ENCODE measurements at regions of chr13 and their contacts with region 1.

Region 1: DNA sequence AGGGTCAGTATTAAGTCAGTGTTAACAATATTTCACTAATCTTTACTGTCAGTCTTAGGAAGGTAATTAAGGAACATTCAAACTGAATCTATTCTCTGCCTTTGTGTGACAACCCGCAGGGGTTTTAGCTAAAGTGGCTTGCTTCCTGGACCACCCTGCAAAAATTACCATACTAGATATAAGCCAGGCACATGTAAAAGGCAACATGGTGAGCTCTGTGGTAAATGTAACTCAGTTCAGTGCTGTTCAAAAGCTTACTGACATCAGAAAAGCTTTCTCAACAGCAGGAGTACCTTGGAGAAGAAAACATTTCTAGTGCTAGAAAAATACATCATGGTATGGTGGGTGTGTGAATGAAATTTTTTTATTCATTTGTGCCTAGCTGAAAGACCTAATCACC is 116.7 kb downstream of the FREM2 start:
- DNase-seq: no peak
- ATAC-seq: no peak
- H3K4me3 ChIP-seq: no peak overlapping the region
- H3K4me3 Mint-ChIP-seq: no peak overlapping the region
- H3K27ac ChIP-seq: no peak overlapping the region
- H3K27ac Mint-ChIP-seq: no peak overlapping the region
- H3K4me1 ChIP-seq: no peaks in the 10 kb centered on the region
- H3K4me1 Mint-ChIP-seq: no peaks in the 10 kb centered on the region
- H3K27me3 ChIP-seq: no peaks in the 10 kb centered on the region
- H3K27me3 Mint-ChIP-seq: no peaks in the 10 kb centered on the region
- CTCF ChIP-seq: no peak

Region 2: DNA sequence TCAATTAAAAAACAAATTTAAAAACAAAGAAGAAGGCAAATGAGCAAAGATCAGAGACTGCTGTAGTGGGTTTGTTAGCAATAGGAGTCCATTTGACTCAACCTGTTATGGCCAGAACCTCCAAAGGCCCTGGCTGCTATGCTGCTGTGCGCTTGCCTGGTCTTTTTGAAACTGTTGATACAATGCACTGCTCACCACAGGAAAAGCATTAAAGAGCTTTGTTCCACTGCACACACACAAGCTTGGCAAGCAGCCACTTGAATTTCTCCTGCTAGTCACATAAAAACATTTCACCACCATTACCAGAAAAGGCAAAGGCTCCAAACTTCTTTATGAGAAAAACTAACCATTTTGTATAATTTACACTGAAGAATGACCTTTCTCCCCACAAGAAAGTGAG is 15.5 kb after region 1 on chr13:
- CTCF ChIA-PET with region 1: no interaction called
- POLR2A ChIA-PET with region 1: no interaction called
- intact Hi-C with region 1: loop called in 1 of 2 experiments (anchors 1 kb)
- DNase-seq: no peak
- ATAC-seq: no peak
- H3K4me3 ChIP-seq: no peak overlapping the region
- H3K4me3 Mint-ChIP-seq: no peak overlapping the region
- H3K27ac ChIP-seq: no peak overlapping the region
- H3K27ac Mint-ChIP-seq: no peak overlapping the region
- H3K4me1 ChIP-seq: no peaks in the 10 kb centered on the region
- H3K4me1 Mint-ChIP-seq: no peaks in the 10 kb centered on the region
- H3K27me3 ChIP-seq: no peaks in the 10 kb centered on the region
- H3K27me3 Mint-ChIP-seq: peaks cover 5% of the 10 kb centered on the region
- CTCF ChIP-seq: no peak

Region 3: GRCh38 chr13:38990693-38991092 is 187.1 kb after region 1 on chr13 and contains the start of gene STOML3:
- CTCF ChIA-PET with region 1: no interaction called
- POLR2A ChIA-PET with region 1: no interaction called
- intact Hi-C with region 1: no loop called
- DNase-seq: no peak
- ATAC-seq: no peak
- H3K4me3 ChIP-seq: no peak within 1 kb of the TSS
- H3K4me3 Mint-ChIP-seq: no peak within 1 kb of the TSS
- H3K27ac ChIP-seq: no peak within 1 kb of the TSS
- H3K27ac Mint-ChIP-seq: no peak within 1 kb of the TSS
- H3K4me1 ChIP-seq: no peaks in the 10 kb centered on the region
- H3K4me1 Mint-ChIP-seq: no peaks in the 10 kb centered on the region
- H3K27me3 ChIP-seq: no peaks in the 10 kb centered on the region
- H3K27me3 Mint-ChIP-seq: no peaks in the 10 kb centered on the region
- CTCF ChIP-seq: no peak
- total RNA-seq, gene STOML3: not detected